ENCODE measurements at regions of chr2 and their contacts with region 1.

Region 1: GRCh38 chr2:72561621-72562318 is 264.1 kb downstream of the EXOC6B start:
- DNase-seq: no peak
- ATAC-seq: peak; percentile 43; the same call in 1 of the 2 replicates
- H3K4me3 ChIP-seq: no peak overlapping the region
- H3K27ac ChIP-seq: no peak overlapping the region
- H3K4me1 ChIP-seq: no peaks in the 10 kb centered on the region
- H3K27me3 ChIP-seq: no peaks in the 10 kb centered on the region
- CTCF ChIP-seq: no peak

Region 2: DNA sequence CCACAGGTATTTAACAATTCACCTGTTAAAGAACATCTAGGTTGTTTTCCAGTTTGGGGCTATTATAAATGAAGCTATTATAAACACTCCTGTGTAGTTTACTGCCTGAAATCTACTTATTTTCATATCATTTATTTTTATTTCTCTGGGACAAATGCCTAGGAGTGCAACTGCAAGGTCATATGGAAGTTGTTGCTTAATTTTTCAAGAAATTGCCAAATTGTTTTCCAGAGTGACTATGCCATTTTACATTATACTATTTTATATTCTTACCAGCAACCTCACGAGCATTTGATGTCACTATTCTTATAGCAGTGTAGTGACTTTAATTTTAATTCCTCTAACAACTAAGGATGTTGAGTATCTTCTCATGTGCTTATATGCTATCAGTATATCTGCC is 34.3 kb before region 1 on chr2:
- CTCF ChIA-PET with region 1: no interaction called
- POLR2A ChIA-PET with region 1: no interaction called
- intact Hi-C with region 1: loop called (anchors 5 kb)
- DNase-seq: no peak
- ATAC-seq: no peak
- H3K4me3 ChIP-seq: no peak overlapping the region
- H3K27ac ChIP-seq: no peak overlapping the region
- H3K4me1 ChIP-seq: no peaks in the 10 kb centered on the region
- H3K27me3 ChIP-seq: no peaks in the 10 kb centered on the region
- CTCF ChIP-seq: no peak

Measured in PC-3 (cell line).